Naive thymus-derived CD4-positive, alpha-beta T cell (primary cell): ENCODE measurements at regions of chr19 and their contacts with region 1.

Region 1: GRCh38 chr19:3146677-3147100 is 10.9 kb downstream of the GNA15 start:
- DNase-seq: peak; percentile 32 to 81 (median 59)
- ATAC-seq: peak; percentile 63
- H3K4me3 ChIP-seq: no peak overlapping the region
- H3K4me3 Mint-ChIP-seq: peak overlapping the region in 1 of 10 donors; percentile 56
- H3K27ac ChIP-seq: no peak overlapping the region
- H3K27ac Mint-ChIP-seq: peak overlapping the region in 4 of 9 donors; percentile 21 to 78 (median 56)
- H3K4me1 ChIP-seq: no peaks in the 10 kb centered on the region
- H3K4me1 Mint-ChIP-seq: peaks cover 0 to 41% (median 0%) of the 10 kb centered on the region in 7 donors
- H3K27me3 ChIP-seq: no peaks in the 10 kb centered on the region
- H3K27me3 Mint-ChIP-seq: no peaks in the 10 kb centered on the region

Region 2: DNA sequence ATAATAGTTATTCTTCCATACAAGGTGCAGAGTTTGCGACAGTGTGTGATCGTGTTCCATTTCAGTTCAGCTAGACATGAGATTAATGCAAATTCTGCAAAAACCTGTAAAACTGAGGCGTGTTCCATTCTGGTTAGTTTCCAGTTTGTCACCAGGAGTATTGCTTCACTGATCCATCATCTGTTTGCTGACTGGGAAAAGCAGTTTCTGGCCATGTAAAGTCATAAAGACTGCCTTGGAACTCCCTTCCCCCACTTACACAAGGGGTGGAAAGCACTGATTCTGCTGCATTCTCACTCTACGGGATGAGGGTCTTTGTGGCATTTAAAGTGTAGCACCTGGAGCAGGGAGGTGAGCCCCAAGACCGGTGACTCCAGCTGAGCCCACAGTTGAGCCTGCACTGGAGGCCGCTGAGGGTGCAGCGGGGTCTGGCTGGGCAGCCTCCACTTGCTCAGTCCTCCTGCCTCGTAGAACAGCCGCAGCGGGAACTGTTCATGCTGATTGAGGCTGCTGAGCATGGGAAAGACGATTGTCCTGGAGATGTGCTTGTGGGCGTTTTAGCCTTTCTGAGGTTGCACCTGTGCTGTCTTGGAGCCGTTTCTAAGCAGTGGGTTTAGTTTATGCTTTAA is 244.0 kb before region 1 on chr19:
- CTCF ChIA-PET with region 1: no interaction called
- POLR2A ChIA-PET with region 1: no interaction called
- intact Hi-C with region 1: no loop called
- DNase-seq: no peak
- ATAC-seq: no peak
- H3K4me3 ChIP-seq: no peak overlapping the region
- H3K4me3 Mint-ChIP-seq: peak overlapping the region in 7 of 10 donors; percentile 88 to 99 (median 96)
- H3K27ac ChIP-seq: no peak overlapping the region
- H3K27ac Mint-ChIP-seq: peak overlapping the region in 1 of 9 donors; percentile 7
- H3K4me1 ChIP-seq: peaks cover 0 to 4% of the 10 kb centered on the region in 2 donors
- H3K4me1 Mint-ChIP-seq: peaks cover 11 to 38% (median 31%) of the 10 kb centered on the region in 7 donors
- H3K27me3 ChIP-seq: no peaks in the 10 kb centered on the region
- H3K27me3 Mint-ChIP-seq: no peaks in the 10 kb centered on the region

Region 3: DNA sequence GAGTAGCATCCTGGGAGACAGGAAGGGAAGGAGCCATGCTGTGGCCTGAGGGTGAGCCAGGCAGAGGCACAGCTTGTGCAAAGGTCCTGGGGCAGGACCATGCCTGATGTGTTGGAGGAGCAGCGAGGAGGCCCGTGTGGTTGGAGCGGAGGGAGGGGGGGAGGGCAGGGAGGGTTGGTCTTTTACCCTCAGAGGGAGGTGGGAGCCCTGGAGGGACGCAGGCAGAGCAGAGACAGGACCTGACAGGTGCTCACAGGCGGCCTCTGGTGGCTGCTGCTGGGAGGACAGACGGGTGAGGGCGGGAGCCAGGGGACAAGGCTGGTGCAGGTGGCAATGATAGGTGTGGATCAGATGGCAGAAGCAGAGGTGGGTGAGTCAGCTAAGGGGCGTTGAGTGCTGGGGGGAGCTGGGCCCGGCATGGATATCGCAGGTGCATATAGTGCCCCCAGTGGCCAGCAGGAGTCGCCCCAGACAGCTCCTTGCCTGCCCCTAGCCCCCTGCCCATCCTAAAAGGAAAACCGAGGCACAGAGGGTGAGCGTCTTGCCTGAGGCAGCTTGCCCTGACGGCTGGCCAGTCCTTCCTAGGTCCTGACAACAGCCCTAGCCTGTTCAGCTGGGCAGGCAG is 20.7 kb before region 1 on chr19:
- CTCF ChIA-PET with region 1: interaction called, 10 read pairs
- POLR2A ChIA-PET with region 1: no interaction called
- intact Hi-C with region 1: no loop called
- DNase-seq: peak in 8 of 9 donors; percentile 32 to 74 (median 64)
- ATAC-seq: peak; percentile 92
- H3K4me3 ChIP-seq: no peak overlapping the region
- H3K4me3 Mint-ChIP-seq: no peak overlapping the region
- H3K27ac ChIP-seq: no peak overlapping the region
- H3K27ac Mint-ChIP-seq: no peak overlapping the region
- H3K4me1 ChIP-seq: no peaks in the 10 kb centered on the region
- H3K4me1 Mint-ChIP-seq: peaks cover 0 to 21% (median 5%) of the 10 kb centered on the region in 7 donors
- H3K27me3 ChIP-seq: no peaks in the 10 kb centered on the region
- H3K27me3 Mint-ChIP-seq: peaks cover 0 to 6% (median 2%) of the 10 kb centered on the region in 5 donors